Gastrocnemius medialis (tissue), 4 donors: ENCODE measurements at regions of chr6 and their contacts with region 1.

Region 1: DNA sequence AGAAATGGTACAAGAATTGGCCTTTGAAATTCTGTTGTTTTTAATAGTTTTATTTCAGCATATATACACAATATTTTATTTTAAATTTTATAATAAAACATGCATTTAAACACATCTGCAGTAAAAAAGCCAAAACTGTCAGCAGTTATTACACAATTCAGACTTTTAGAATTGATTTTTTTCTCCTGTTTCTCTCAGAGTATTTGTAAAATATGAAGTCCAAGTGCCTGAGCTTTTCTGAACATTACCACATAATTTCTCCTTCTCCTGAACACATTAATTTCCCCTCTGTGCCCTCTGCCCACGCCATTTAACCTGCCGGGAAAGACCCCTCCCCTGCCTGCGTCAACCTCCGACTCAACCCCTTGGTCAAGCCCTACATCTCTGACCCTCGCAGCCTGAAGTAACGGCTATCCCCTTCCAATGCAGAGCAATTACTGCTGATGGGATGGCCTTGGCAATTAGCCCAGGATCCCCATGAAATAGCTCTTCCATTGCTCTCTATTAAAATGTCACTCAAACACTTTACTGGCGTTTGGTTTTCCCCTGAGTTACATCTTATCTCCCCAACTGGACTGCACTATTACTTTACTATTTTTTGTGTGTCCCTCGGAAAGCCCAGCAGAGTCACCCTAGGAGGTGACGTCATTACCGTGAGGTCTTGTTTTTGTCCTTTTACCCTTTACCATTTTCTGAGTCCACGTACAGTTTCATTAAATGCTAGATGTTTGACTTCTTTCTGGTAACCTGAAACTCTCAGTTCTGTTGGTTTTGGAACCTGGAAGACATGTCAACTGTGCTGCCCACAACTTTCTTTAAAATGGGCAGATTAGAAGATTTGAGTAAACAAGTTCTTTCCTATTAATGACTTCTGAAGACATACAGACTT is 146.7 kb upstream of the TAB2 start:
- DNase-seq: no peak
- ATAC-seq: no peak
- H3K4me3 ChIP-seq: no peak overlapping the region
- H3K27ac ChIP-seq: no peak overlapping the region
- H3K4me1 ChIP-seq: no peaks in the 10 kb centered on the region
- H3K27me3 ChIP-seq: no peaks in the 10 kb centered on the region
- CTCF ChIP-seq: no peak
- POLR2A ChIP-seq: no peak

Region 2: DNA sequence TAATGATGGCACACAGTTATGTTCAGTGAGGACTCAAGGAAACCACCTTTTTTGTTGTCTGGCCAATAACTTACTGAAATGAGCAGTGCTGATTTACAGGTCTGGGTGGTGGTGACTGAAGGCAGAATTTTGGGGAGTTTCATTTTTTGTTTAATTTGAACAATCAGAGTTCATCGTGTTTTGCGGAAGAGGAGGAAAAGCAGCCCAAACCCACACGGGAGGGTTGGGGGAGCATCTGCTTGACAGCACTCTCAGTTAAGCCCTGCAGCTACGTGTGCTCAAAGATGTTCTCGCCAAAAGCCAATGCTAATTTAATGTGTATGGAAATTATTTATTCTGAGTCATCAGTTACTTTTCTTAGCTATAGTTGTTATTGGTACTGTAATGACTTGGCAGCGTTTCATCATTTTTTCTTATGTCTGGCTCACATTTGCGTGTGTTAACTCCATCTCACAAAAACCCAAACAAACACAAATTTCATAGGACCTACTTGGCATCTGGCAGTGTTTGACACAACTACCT is 334.8 kb before region 1 on chr6:
- in situ Hi-C with region 1: no loop called
- intact Hi-C with region 1: no loop called
- DNase-seq: no peak
- ATAC-seq: no peak
- H3K4me3 ChIP-seq: no peak overlapping the region
- H3K27ac ChIP-seq: no peak overlapping the region
- H3K4me1 ChIP-seq: no peaks in the 10 kb centered on the region
- H3K27me3 ChIP-seq: no peaks in the 10 kb centered on the region
- CTCF ChIP-seq: no peak
- POLR2A ChIP-seq: no peak

Region 3: GRCh38 chr6:149129371-149130077 is 41.3 kb before region 1 on chr6:
- in situ Hi-C with region 1: no loop called
- intact Hi-C with region 1: loop called (anchors 1 kb)
- DNase-seq: peak in 1 of 2 donors; percentile 38
- ATAC-seq: peak; percentile 58 to 83
- H3K4me3 ChIP-seq: no peak overlapping the region
- H3K27ac ChIP-seq: no peak overlapping the region
- H3K4me1 ChIP-seq: no peaks in the 10 kb centered on the region
- H3K27me3 ChIP-seq: no peaks in the 10 kb centered on the region
- CTCF ChIP-seq: no peak
- POLR2A ChIP-seq: no peak

Region 4: GRCh38 chr6:149306967-149307366 is 136.2 kb after region 1 on chr6:
- in situ Hi-C with region 1: no loop called
- intact Hi-C with region 1: no loop called
- DNase-seq: no peak
- ATAC-seq: peak; percentile 16 to 36
- H3K4me3 ChIP-seq: no peak overlapping the region
- H3K27ac ChIP-seq: no peak overlapping the region
- H3K4me1 ChIP-seq: no peaks in the 10 kb centered on the region
- H3K27me3 ChIP-seq: no peaks in the 10 kb centered on the region
- CTCF ChIP-seq: no peak
- POLR2A ChIP-seq: no peak

Region 5: DNA sequence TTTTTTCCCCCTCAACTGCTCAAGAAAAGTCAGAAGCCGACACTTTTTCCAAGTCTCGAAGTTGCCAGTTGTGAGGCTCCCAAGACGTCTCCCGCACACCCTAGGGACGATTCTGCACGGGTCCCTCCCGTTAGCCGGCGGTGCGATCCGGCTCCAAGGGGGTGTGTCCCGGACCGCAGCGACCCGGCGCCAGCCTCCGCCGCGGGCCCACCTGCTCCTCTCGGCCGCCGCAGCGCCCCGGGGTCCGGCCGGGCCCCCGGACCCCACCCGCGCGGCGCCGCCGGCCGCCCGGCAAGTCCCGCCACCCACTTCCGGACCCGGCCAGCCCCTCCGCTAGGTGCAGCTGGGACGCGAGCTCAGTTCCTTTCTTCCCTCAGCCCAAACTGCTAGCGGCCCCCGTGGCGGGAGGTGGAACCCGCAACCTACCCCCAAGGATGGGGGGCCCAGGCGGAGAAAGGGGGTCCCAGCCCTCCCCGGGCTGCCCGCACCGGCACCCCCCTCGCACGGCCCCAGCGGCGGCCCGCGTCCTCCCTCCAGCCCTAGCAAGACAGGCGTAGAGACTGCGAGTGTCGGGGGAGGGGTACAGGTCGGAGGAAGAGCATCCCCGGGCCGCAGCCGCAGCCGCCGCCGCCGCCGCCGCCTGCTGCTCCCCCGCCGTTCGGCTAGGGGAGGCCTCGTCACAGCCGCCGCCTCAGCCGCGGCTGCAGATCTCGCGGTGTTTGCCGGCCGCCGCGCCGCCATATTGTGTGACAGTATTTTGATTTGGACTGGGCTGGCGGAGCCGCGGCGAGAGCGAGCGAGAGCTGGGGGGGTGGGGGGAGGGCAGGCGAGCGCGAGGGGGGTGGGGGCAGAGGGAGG is 146.2 kb after region 1 on chr6:
- in situ Hi-C with region 1: no loop called
- intact Hi-C with region 1: no loop called
- DNase-seq: peak; percentile 79 to 90
- ATAC-seq: peak; percentile 89
- H3K4me3 ChIP-seq: peak overlapping the region; percentile 89 to 98 (median 96)
- H3K27ac ChIP-seq: peak overlapping the region; percentile 94 to 98 (median 96)
- H3K4me1 ChIP-seq: peaks cover 24 to 30% of the 10 kb centered on the region in 2 donors
- H3K27me3 ChIP-seq: peaks cover 0 to 2% (median 0%) of the 10 kb centered on the region in 3 donors
- CTCF ChIP-seq: no peak
- POLR2A ChIP-seq: peak; percentile 66 to 68